ENCODE measurements at regions of chr3 and their contacts with region 1.

Region 1: GRCh38 chr3:148158210-148158609 is 539.5 kb upstream of the AGTR1 start:
- DNase-seq: peak; percentile 78
- H3K4me3 Mint-ChIP-seq: no peak overlapping the region
- H3K27ac Mint-ChIP-seq: no peak overlapping the region
- H3K4me1 Mint-ChIP-seq: no peaks in the 10 kb centered on the region
- H3K27me3 Mint-ChIP-seq: no peaks in the 10 kb centered on the region
- CTCF ChIP-seq: no peak

Region 2: GRCh38 chr3:148128135-148128534 is 30.1 kb before region 1 on chr3:
- CTCF ChIA-PET with region 1: no interaction called
- intact Hi-C with region 1: no loop called
- DNase-seq: no peak
- H3K4me3 Mint-ChIP-seq: no peak overlapping the region
- H3K27ac Mint-ChIP-seq: no peak overlapping the region
- H3K4me1 Mint-ChIP-seq: peaks cover 7% of the 10 kb centered on the region
- H3K27me3 Mint-ChIP-seq: no peaks in the 10 kb centered on the region
- CTCF ChIP-seq: no peak

Region 3: GRCh38 chr3:148202386-148202785 is 44.2 kb after region 1 on chr3:
- CTCF ChIA-PET with region 1: no interaction called
- intact Hi-C with region 1: loop called (anchors 2 kb)
- DNase-seq: no peak
- H3K4me3 Mint-ChIP-seq: no peak overlapping the region
- H3K27ac Mint-ChIP-seq: no peak overlapping the region
- H3K4me1 Mint-ChIP-seq: no peaks in the 10 kb centered on the region
- H3K27me3 Mint-ChIP-seq: no peaks in the 10 kb centered on the region
- CTCF ChIP-seq: no peak

Region 4: DNA sequence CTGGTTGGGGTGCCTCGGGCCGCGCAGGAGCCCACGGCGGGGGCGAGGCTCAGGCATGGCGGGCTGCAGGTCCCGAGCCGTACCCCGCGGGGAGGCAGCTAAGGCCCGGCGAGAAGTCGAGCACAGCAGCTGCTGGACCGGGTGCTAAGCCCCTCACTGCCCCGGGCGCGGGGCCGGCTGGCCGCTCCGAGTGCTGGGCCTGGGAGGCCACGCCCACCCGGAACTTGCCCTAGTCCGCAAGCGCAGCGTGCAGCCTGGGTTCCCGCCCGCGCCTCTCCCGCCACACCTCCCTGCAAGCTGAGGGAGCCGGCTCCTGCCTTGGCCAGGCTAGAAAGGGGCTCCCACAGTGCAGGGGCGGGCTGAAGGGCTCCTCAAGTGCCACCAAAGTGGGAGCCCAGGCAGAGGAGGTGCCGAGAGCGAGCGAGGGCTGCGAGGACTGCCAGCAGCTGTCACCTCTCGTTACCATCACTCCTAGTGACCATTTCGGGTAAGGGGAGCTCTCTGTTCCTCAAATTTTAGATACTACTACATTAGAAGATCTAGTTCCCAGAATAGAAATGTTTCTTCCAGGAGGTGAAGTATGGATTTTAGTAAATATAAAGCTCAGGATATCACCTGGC is 122.5 kb after region 1 on chr3:
- CTCF ChIA-PET with region 1: no interaction called
- intact Hi-C with region 1: no loop called
- DNase-seq: no peak
- H3K4me3 Mint-ChIP-seq: no peak overlapping the region
- H3K27ac Mint-ChIP-seq: no peak overlapping the region
- H3K4me1 Mint-ChIP-seq: no peaks in the 10 kb centered on the region
- H3K27me3 Mint-ChIP-seq: no peaks in the 10 kb centered on the region
- CTCF ChIP-seq: no peak

Measured in Calu3 (cell line).